HCT116 (cell line): ENCODE measurements at regions of chr3 and their contacts with region 1.

Region 1: DNA sequence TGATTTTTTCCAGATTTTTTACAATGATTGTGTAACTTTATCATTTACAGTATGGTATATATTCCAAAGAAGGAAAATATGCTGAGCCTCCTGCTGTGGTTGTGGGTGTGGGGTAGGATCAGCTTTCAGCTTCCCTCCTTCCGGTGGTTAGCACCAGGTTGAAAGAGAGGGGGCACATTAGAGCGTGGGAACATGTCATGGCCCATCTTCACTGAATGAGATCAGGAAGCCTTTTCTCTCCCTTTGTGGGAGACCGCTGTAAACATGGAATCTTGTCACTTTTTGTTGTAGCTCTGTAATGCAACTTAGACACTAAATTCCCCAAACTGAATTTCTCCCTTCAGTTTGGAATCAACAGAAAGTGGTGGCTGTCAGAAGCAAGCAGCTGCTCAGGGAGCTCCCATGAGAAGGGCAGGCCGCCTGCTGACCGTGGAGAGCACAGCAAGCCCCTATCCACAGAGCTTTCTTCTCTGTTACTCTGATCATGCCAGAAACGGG is 86.7 kb upstream of the LIMD1 start:
- DNase-seq: no peak
- ATAC-seq: 0 out of 2 replicates have a peak, but pooled peaks have one; percentile 56
- H3K4me3 ChIP-seq: no peak overlapping the region
- H3K27ac ChIP-seq: peak overlapping the region; percentile 42; the same call in 1 of the 2 replicates
- H3K4me1 ChIP-seq: peaks cover 24 to 33% of the 10 kb centered on the region in 2 experiments
- H3K27me3 ChIP-seq: no peaks in the 10 kb centered on the region
- CTCF ChIP-seq: no peak; a peak in 1 of 6 replicates
- POLR2A ChIP-seq: no peak
- RAD21 ChIP-seq: no peak

Region 2: GRCh38 chr3:45043728-45044299 is 464.1 kb before region 1 on chr3:
- CTCF ChIA-PET with region 1: interaction called, 10 read pairs
- POLR2A ChIA-PET with region 1: no interaction called
- RAD21 ChIA-PET with region 1: interaction called in 1 of 2 experiments, 3 read pairs
- intact Hi-C with region 1: no loop called
- DNase-seq: no peak
- ATAC-seq: peak; percentile 26; the same call in 1 of the 2 replicates
- H3K4me3 ChIP-seq: no peak overlapping the region
- H3K27ac ChIP-seq: no peak overlapping the region
- H3K4me1 ChIP-seq: peaks cover 8 to 20% of the 10 kb centered on the region in 2 experiments; a peak in 3 of 4 replicates
- H3K27me3 ChIP-seq: no peaks in the 10 kb centered on the region
- CTCF ChIP-seq: 0 out of 6 replicates have a peak, but pooled peaks of 1 of the 3 experiments have one; percentile 38
- POLR2A ChIP-seq: no peak
- RAD21 ChIP-seq: peak; percentile 66

Region 3: DNA sequence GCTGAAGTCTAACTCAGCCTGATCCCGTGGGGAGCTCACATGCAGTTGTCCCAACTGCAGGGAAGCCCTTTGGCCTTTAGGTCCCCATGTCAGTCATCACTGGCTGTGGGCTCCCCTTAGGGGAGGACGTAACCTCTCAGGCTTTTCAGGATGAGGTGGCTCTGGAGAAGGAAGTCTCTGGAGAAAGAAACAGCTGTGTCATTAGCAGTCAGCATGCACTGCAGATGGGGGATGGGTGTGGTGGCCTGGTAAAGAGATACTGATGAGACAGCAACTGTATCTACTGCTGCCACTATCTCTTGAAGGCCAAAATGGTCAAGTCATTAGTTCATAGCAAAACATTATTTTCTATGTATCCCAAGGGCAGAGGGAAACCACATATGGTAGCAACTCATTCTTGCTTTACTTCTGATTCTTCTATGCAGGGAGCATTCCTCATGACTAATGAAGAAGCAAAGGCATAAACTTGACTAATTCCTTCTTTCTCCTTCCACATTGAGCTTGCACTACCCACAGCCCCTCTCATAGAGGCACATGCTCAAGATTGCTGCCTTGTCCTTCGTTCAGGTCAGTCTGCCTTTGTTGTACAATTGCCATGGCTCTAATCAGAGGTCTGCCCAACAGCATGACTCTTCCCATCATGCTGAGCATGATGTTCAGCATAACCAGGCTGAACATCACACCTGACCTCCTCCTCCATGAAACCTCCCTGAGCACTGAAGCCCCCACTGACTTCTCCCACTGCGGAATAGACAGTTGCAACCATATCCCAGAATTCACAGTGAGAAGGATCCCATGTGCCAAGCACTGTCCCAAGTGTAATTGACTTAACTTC is 234.0 kb before region 1 on chr3:
- CTCF ChIA-PET with region 1: no interaction called
- POLR2A ChIA-PET with region 1: no interaction called
- RAD21 ChIA-PET with region 1: no interaction called
- intact Hi-C with region 1: no loop called
- DNase-seq: no peak
- ATAC-seq: no peak
- H3K4me3 ChIP-seq: no peak overlapping the region
- H3K27ac ChIP-seq: no peak overlapping the region
- H3K4me1 ChIP-seq: no peaks in the 10 kb centered on the region
- H3K27me3 ChIP-seq: no peaks in the 10 kb centered on the region
- CTCF ChIP-seq: no peak
- POLR2A ChIP-seq: no peak
- RAD21 ChIP-seq: no peak

Region 4: DNA sequence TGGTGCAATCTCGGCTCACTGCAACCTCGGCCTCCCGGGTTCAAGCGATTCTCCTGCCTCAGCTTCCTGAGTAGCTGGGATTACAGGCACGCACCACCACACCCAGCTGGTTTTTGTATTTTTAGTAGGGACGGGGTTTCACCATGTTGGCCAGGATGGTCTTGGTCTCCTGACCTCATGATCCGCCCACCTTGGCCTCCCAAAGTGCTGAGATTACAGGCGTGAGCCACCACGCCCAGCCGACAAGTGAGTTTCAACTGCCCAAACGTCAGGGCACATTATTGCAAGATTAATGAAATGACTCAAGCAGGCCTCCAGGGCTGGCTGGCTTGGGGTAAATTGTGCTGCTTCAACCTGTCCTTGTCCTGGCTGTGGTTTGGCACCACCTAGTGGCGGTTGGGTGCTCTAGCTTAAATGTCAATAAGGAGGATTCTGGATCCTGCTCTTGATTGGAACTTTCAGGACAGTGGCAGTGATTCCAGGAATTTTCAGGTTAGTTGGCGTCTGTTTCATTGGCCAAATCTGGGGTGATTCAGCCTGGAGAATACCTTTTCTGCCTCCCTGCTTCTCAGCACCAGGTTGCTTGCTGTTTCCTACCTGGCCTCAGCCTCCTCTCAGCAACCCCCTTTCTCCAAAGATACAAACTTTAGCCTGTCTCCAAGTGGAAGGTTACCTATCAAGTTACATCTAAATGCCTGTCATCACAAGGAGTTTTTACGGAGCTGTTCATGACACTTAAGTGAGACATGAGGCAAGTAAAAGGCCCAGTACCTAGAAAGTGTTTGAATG is 148.9 kb after region 1 on chr3:
- CTCF ChIA-PET with region 1: interaction called, 22 read pairs
- POLR2A ChIA-PET with region 1: no interaction called
- RAD21 ChIA-PET with region 1: interaction called, 3 to 4 read pairs
- intact Hi-C with region 1: loop called (anchors 1 kb)
- DNase-seq: peak; percentile 89
- ATAC-seq: peak; percentile 90
- H3K4me3 ChIP-seq: no peak overlapping the region
- H3K27ac ChIP-seq: no peak overlapping the region
- H3K4me1 ChIP-seq: peaks cover 0 to 15% of the 10 kb centered on the region in 2 experiments; a peak in 1 of 4 replicates
- H3K27me3 ChIP-seq: no peaks in the 10 kb centered on the region
- CTCF ChIP-seq: peak; percentile 86 to 93 (median 91)
- POLR2A ChIP-seq: no peak
- RAD21 ChIP-seq: peak; percentile 95

Region 5: DNA sequence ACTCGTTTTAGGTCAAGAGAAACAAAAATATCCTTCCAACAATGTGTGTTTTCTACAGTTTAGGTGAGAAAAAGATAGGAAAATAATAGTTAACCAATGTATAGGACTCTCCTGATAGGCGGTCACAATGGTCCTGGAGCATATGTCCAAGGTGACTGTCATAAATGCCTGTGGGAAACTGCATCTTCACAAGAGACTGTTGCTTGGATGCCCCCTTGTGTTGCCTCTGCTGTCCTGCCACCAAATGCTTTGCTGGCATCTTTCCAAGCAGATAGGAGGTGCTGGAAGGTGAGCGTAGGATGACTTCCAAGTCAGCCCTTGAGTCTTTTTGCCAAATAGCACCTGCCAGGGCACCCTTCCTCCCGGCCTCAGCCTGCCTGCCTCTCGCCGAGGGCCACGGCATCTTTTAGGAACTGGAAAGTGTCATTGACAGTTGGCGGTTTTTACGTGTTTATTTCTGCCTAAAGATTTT is 157.3 kb after region 1 on chr3:
- CTCF ChIA-PET with region 1: interaction called, 22 read pairs
- POLR2A ChIA-PET with region 1: no interaction called
- RAD21 ChIA-PET with region 1: interaction called in 1 of 2 experiments, 4 read pairs
- intact Hi-C with region 1: loop called (anchors 2 kb)
- DNase-seq: peak; percentile 68
- ATAC-seq: peak; percentile 83
- H3K4me3 ChIP-seq: no peak overlapping the region
- H3K27ac ChIP-seq: no peak overlapping the region
- H3K4me1 ChIP-seq: peaks cover 8 to 17% of the 10 kb centered on the region in 2 experiments; a peak in 3 of 4 replicates
- H3K27me3 ChIP-seq: no peaks in the 10 kb centered on the region
- CTCF ChIP-seq: peak; percentile 73 to 92 (median 81)
- POLR2A ChIP-seq: no peak
- RAD21 ChIP-seq: peak; percentile 68

Region 6: GRCh38 chr3:45832691-45833090 is 324.8 kb after region 1 on chr3:
- CTCF ChIA-PET with region 1: interaction called, 4 read pairs
- POLR2A ChIA-PET with region 1: no interaction called
- RAD21 ChIA-PET with region 1: interaction called in 1 of 2 experiments, 3 read pairs
- intact Hi-C with region 1: loop called (anchors 1 kb)
- DNase-seq: peak; percentile 21
- ATAC-seq: peak; percentile 93
- H3K4me3 ChIP-seq: no peak overlapping the region
- H3K27ac ChIP-seq: no peak overlapping the region
- H3K4me1 ChIP-seq: no peaks in the 10 kb centered on the region
- H3K27me3 ChIP-seq: no peaks in the 10 kb centered on the region
- CTCF ChIP-seq: peak; percentile 37 to 73 (median 57)
- POLR2A ChIP-seq: no peak
- RAD21 ChIP-seq: peak; percentile 88

Region 7: DNA sequence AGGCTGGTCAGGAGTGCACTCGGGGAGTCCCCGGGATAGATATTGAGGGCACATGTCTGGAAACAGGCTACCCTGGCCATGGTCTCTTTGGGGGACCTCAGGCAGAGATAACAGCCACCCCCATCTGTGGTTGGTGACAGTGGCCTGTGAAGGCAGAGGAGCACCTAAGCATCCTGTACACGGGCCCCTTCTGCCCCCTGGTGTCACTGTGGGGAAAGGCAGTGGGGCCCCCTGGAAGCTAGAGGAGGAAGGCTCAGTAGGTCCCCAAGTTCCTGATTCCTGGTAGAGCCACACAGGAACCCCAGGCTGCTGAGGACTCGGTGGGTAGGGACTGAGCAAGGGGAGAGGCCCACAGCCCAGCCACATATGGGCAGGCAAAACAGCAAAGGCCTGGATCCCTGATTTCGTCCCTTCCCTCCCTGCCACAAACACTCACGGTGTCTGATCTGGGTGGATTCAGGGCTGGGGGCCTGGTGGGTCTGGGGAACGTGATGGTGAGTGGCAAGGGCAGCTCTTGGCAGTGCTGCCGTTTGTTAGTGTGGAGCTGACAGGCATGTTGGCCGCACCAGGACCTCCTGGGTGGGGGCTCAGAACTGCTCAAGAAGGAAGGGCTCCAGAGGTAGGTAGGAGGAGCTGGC is 421.3 kb after region 1 on chr3:
- CTCF ChIA-PET with region 1: interaction called, 5 read pairs
- POLR2A ChIA-PET with region 1: no interaction called
- RAD21 ChIA-PET with region 1: no interaction called
- intact Hi-C with region 1: loop called (anchors 1 kb)
- DNase-seq: peak; percentile 10
- ATAC-seq: peak; percentile 98
- H3K4me3 ChIP-seq: no peak overlapping the region
- H3K27ac ChIP-seq: no peak overlapping the region
- H3K4me1 ChIP-seq: peaks cover under 1 to 5% of the 10 kb centered on the region in 2 experiments; a peak in 3 of 4 replicates
- H3K27me3 ChIP-seq: no peaks in the 10 kb centered on the region
- CTCF ChIP-seq: peak; percentile 69 to 83 (median 83)
- POLR2A ChIP-seq: no peak
- RAD21 ChIP-seq: peak; percentile 85